PC-9 (cell line): ENCODE measurements at regions of chr4 and their contacts with region 1.

Region 1: DNA sequence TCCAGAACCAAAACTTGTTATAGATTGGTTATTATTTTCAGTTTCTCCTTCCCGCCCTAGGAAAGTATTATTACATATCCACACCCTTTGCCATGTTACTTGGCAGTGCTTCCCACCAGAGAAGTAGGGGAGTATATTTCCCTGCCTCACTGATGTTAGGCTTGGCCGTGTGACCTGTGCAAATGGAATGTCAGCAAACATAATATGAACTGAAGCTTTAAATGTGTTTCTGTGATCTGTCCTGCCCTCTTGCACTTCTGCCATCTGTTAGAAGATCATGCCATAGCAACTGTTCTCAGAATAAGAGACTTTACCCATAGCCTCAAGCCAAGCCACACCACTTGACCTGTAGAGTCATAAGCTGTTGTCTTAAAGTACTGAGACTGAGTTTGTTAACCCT is 36.7 kb upstream of the NEUROG2 start:
- DNase-seq: peak in 1 of 2 experiments; percentile 41
- H3K4me3 ChIP-seq: no peak overlapping the region
- H3K27ac ChIP-seq: no peak overlapping the region
- H3K4me1 ChIP-seq: no peaks in the 10 kb centered on the region
- H3K27me3 ChIP-seq: no peaks in the 10 kb centered on the region
- CTCF ChIP-seq: no peak

Region 2: DNA sequence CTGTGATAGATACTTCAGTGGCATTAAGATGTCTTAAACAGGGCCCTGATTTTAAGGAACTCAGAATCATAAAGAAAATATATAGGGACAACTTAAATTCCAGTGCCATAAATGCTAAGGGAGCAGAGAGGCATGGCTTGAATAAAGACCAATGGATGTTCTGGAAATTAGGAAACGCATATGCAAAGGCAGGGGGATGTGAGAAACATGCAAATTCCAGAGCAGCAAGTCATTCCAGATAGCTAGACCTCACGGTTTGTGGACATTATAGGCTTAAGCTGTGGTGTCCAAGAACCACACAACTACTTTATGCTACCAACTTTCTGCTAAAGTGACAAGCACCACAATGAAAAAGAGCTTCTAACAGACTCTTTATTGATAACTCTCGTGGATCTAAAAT is 364.2 kb after region 1 on chr4:
- CTCF ChIA-PET with region 1: interaction called, 11 read pairs
- POLR2A ChIA-PET with region 1: no interaction called
- intact Hi-C with region 1: no loop called
- DNase-seq: no peak
- H3K4me3 ChIP-seq: no peak overlapping the region
- H3K27ac ChIP-seq: no peak overlapping the region
- H3K4me1 ChIP-seq: no peaks in the 10 kb centered on the region
- H3K27me3 ChIP-seq: no peaks in the 10 kb centered on the region
- CTCF ChIP-seq: no peak